ENCODE measurements at regions of chr16 and their contacts with region 1.

Region 1: GRCh38 chr16:81314603-81315270 is at the start of gene GAN:
- DNase-seq: peak; percentile 95
- H3K4me3 Mint-ChIP-seq: peak within 1 kb of the TSS; percentile 90
- H3K27ac Mint-ChIP-seq: peak within 1 kb of the TSS; percentile 83
- H3K4me1 Mint-ChIP-seq: peaks cover 76% of the 10 kb centered on the region
- H3K27me3 Mint-ChIP-seq: no peaks in the 10 kb centered on the region
- total RNA-seq, gene GAN: 16.4 and 16.8 TPM in 2 replicates

Region 2: DNA sequence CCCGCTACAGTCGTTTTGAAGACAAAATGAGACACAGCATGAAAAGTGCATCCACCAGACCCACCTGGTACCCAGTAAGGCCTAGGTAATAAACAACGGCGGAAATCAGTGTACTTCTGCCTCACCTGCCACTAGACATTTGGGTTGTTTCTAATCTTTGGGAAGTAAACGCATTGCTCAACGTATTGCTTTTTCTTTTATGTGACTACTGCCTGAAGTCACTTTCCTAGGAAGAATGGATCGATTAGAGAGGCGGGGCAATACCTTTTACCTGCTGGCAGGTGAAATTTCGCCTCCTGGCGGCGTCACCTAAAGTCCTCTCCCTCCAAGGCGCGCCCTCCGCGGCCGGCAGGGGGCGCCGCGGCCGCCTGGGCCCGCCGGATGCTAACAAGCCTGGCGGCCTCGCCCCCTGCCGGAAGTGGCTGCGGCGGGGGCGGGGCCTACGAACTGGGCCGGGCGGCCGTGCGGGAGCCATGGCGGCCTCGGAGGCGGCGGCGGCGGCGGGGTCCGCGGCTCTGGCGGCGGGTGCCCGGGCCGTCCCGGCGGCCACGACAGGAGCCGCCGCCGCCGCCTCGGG is 279.3 kb before region 1 on chr16 and contains the start of gene ATMIN:
- intact Hi-C with region 1: loop called (anchors 1 kb)
- DNase-seq: peak; percentile 85
- H3K4me3 Mint-ChIP-seq: peak within 1 kb of the TSS; percentile 88
- H3K27ac Mint-ChIP-seq: peak within 1 kb of the TSS; percentile 65
- H3K4me1 Mint-ChIP-seq: peaks cover 27% of the 10 kb centered on the region
- H3K27me3 Mint-ChIP-seq: no peaks in the 10 kb centered on the region
- total RNA-seq, gene ATMIN: 31.2 and 32.3 TPM in 2 replicates

Region 3: DNA sequence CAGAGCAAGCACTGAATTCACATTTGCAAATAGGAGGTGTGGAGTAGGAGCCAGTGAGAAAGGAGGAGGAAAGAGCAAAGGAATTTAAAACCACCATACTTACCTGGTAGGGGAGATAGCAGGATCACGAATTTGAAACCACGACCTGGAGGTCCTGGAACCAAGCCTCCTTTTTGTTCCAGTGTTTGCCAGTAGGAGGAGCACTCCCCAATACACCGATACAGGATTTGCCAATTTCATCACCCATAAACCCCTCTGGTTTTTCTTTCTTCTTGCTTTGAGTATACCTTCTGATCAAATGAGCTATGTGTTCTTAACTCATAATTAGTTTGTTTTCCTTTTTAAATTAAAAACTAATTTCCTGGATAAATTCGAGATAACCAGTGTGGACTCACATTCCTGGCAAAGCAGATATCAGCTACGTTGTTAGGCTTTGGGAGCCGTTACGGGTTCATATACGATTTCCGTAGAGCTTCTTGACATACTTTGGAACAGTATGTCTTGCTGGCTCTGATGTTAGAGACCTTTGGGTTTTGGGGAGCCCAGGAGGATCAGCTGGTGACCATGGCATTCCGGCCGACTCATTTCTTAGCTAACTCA is 53.6 kb before region 1 on chr16:
- intact Hi-C with region 1: loop called (anchors 2 kb)
- DNase-seq: peak; percentile 1
- H3K4me3 Mint-ChIP-seq: no peak overlapping the region
- H3K27ac Mint-ChIP-seq: no peak overlapping the region
- H3K4me1 Mint-ChIP-seq: no peaks in the 10 kb centered on the region
- H3K27me3 Mint-ChIP-seq: peaks cover 9% of the 10 kb centered on the region

Region 4: GRCh38 chr16:81366316-81366932 is 51.7 kb after region 1 on chr16:
- intact Hi-C with region 1: loop called (anchors 5 kb)
- DNase-seq: no peak
- H3K4me3 Mint-ChIP-seq: no peak overlapping the region
- H3K27ac Mint-ChIP-seq: no peak overlapping the region
- H3K4me1 Mint-ChIP-seq: no peaks in the 10 kb centered on the region
- H3K27me3 Mint-ChIP-seq: no peaks in the 10 kb centered on the region

Region 5: DNA sequence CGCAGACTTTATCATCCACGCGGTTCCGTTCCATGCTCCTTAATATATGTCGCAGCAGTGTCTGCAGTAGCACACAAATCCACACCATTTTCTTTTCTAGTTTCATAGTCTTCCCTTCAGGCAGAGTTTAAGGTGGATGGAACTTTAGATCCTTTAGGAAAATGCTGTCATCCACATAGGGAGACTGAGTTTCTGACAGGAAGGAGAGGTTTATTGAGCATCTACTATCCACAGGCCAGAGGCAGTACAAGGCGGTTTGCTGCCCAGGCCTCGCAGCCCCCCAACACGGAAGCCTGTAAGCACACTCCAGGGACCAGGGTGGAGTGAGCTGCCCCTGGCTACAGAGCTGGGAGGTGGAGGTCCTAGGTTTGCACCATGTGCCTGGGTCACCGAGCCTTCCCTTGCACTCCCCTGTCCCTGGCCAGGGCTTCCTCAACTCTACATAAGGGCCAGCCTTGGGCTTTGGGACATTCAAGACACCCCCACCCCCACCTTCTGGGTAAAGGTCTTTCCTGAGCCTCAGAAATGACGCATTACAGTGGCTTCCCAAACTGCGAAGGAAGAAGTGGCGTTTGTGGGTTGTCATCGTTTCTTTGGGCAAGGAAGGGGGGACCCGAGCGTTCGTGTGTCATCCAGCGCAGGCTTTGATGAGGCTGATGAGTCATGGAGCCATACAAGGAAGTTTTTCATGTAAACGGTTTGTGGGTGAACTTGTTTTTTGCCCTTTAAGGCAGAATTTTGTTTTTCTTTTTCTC is 317.8 kb after region 1 on chr16:
- intact Hi-C with region 1: loop called (anchors 5 kb)
- DNase-seq: peak; percentile 76
- H3K4me3 Mint-ChIP-seq: peak overlapping the region; percentile 80
- H3K27ac Mint-ChIP-seq: peak overlapping the region; percentile 98
- H3K4me1 Mint-ChIP-seq: peaks cover 67% of the 10 kb centered on the region
- H3K27me3 Mint-ChIP-seq: no peaks in the 10 kb centered on the region

Region 6: DNA sequence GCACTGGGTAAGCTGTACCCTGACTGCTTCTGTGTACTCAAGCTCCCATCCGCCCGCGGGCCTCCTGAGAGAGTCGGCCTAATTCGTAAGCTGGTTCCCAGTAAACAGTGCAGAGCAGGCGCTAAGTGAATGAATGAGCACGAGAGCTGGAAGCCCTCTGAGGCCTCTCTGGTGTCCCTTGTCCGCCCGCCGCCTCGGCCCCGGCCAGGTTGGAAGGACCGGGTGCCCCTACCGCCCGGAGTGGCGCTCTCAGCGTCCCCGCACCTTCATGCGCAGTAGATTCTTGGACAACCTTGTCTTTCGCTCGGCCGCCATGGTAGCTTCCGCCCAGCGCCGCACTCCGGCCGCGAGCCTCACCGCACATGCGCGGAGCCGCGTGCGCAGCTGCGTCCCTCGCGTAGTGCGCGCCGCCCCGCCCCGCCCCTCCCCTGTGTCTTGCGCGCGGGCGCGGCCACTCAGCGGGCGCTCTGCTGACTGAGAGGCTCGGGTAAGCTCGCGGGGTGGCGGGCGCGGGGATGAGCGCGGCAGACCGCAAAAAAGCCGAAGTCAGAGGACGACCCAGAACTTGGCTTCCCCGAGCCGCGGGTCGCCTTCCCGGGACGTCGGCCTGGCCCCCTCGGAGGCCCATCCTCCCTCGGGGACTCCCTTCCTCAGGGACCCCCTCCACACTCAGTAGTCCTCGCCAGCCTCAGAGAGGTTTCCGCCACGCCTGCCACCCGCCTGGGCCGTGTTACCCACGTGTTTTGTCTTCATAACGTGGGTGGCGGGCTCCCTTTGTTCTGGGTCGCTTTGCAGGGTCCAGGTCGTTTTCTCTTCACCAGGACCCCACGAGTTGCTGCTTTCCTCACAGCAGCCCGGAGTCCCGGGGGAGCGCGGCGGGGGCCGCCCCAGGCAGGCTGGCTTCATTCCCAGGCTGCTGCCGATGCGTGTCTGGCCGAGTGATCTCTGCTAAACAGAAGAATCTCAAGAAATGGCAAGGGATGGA is 855.4 kb after region 1 on chr16 and contains the start of gene MPHOSPH6:
- intact Hi-C with region 1: loop called (anchors 2 kb)
- DNase-seq: peak; percentile 85
- H3K4me3 Mint-ChIP-seq: peak within 1 kb of the TSS; percentile 94
- H3K27ac Mint-ChIP-seq: peak within 1 kb of the TSS; percentile 91
- H3K4me1 Mint-ChIP-seq: peaks cover 22% of the 10 kb centered on the region
- H3K27me3 Mint-ChIP-seq: peaks cover 29% of the 10 kb centered on the region
- total RNA-seq, gene MPHOSPH6: 49.6 and 49.8 TPM in 2 replicates

Measured in activated T-helper 1 cell treated with anti-CD3 and anti-CD28 coated beads, Interleukin-12 subunit alpha, Interleukin-12 subunit beta, Interleukin-2, Interleukin-4 antibody, amounts not matched to agents 30 ng/mL and 10 ng/mL and 1 ng/mL, durations not matched to agents 14 hours and 24 hours and 36 hours (primary cell).